GM12878 (cell line): ENCODE measurements at regions of chr17 and their contacts with region 1.

Region 1: GRCh38 chr17:36089888-36090836 is at the start of gene CCL3:
- DNase-seq: peak; percentile 99
- ATAC-seq: peak; percentile 70
- H3K4me3 ChIP-seq: peak within 1 kb of the TSS; percentile 64
- H3K27ac ChIP-seq: peak within 1 kb of the TSS; percentile 87
- H3K4me1 ChIP-seq: peaks cover 50% of the 10 kb centered on the region
- H3K27me3 ChIP-seq: no peaks in the 10 kb centered on the region
- CTCF ChIP-seq: no peak
- EP300 ChIP-seq: peak; percentile 91 to 96
- POLR2A ChIP-seq: peak; percentile 92
- RAD21 ChIP-seq: no peak
- polyA plus RNA-seq, gene CCL3: 240 to 318 TPM

Region 2: GRCh38 chr17:35931794-35932425 is 158.3 kb before region 1 on chr17:
- CTCF ChIA-PET with region 1: no interaction called
- POLR2A ChIA-PET with region 1: no interaction called
- RAD21 ChIA-PET with region 1: no interaction called
- SMC1A ChIA-PET with region 1: no interaction called
- in situ Hi-C with region 1: no loop called
- intact Hi-C with region 1: no loop called
- DNase-seq: no peak
- ATAC-seq: no peak
- H3K4me3 ChIP-seq: no peak overlapping the region
- H3K27ac ChIP-seq: no peak overlapping the region
- H3K4me1 ChIP-seq: peaks cover 5% of the 10 kb centered on the region; the same call in 1 of the 2 replicates
- H3K27me3 ChIP-seq: no peaks in the 10 kb centered on the region
- CTCF ChIP-seq: no peak
- EP300 ChIP-seq: no peak
- POLR2A ChIP-seq: no peak
- RAD21 ChIP-seq: no peak

Region 3: DNA sequence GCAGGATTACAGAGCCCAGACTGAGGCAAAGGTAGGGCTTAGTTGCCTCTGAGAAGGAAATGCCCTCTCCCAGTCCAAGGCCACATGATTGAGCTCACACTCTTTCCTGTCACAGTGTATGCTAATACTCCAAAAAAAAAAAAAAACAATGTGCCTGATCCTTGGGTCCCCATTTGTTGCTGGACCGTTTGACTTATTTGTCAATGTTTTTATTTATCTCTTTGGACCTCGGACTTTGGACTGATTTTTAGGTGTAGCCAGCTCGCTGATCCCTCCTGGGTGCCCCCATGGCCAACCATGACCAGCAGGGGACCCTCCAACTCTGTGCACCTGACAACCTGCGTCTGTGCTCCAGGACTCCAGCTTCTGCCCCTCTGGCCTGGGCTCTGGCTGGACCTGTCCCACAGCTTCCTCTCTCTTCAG is 108.2 kb before region 1 on chr17:
- CTCF ChIA-PET with region 1: interaction called, 5 read pairs
- POLR2A ChIA-PET with region 1: interaction called, 3 read pairs
- RAD21 ChIA-PET with region 1: interaction called, 6 read pairs
- SMC1A ChIA-PET with region 1: interaction called, 11 read pairs
- in situ Hi-C with region 1: no loop called
- intact Hi-C with region 1: no loop called
- DNase-seq: no peak
- ATAC-seq: peak; percentile 49
- H3K4me3 ChIP-seq: no peak overlapping the region
- H3K27ac ChIP-seq: no peak overlapping the region
- H3K4me1 ChIP-seq: peaks cover 6% of the 10 kb centered on the region; the same call in 1 of the 2 replicates
- H3K27me3 ChIP-seq: no peaks in the 10 kb centered on the region
- CTCF ChIP-seq: peak; percentile 36 to 46 (median 39); a peak in 5 of 6 replicates
- EP300 ChIP-seq: no peak
- POLR2A ChIP-seq: no peak
- RAD21 ChIP-seq: peak; percentile 71

Region 4: GRCh38 chr17:36107660-36108059 is 17.5 kb after region 1 on chr17:
- CTCF ChIA-PET with region 1: interaction called, 5 read pairs
- POLR2A ChIA-PET with region 1: interaction called, 4 read pairs
- RAD21 ChIA-PET with region 1: interaction called, 20 read pairs
- SMC1A ChIA-PET with region 1: interaction called, 22 read pairs
- in situ Hi-C with region 1: no loop called
- intact Hi-C with region 1: loop called (anchors 1 kb)
- DNase-seq: no peak
- ATAC-seq: no peak
- H3K4me3 ChIP-seq: no peak overlapping the region
- H3K27ac ChIP-seq: no peak overlapping the region
- H3K4me1 ChIP-seq: peaks cover 13% of the 10 kb centered on the region
- H3K27me3 ChIP-seq: no peaks in the 10 kb centered on the region
- CTCF ChIP-seq: no peak
- EP300 ChIP-seq: no peak
- POLR2A ChIP-seq: no peak
- RAD21 ChIP-seq: no peak

Region 5: GRCh38 chr17:36117505-36118382 is 27.6 kb after region 1 on chr17:
- CTCF ChIA-PET with region 1: interaction called, 10 read pairs
- POLR2A ChIA-PET with region 1: interaction called, 4 read pairs
- RAD21 ChIA-PET with region 1: interaction called, 29 read pairs
- SMC1A ChIA-PET with region 1: interaction called, 23 read pairs
- in situ Hi-C with region 1: no loop called
- intact Hi-C with region 1: no loop called
- DNase-seq: no peak
- ATAC-seq: peak; percentile 89
- H3K4me3 ChIP-seq: no peak overlapping the region
- H3K27ac ChIP-seq: no peak overlapping the region
- H3K4me1 ChIP-seq: peaks cover 18% of the 10 kb centered on the region
- H3K27me3 ChIP-seq: no peaks in the 10 kb centered on the region
- CTCF ChIP-seq: no peak
- EP300 ChIP-seq: no peak; a peak in 1 of 4 replicates
- POLR2A ChIP-seq: no peak
- RAD21 ChIP-seq: no peak

Region 6: DNA sequence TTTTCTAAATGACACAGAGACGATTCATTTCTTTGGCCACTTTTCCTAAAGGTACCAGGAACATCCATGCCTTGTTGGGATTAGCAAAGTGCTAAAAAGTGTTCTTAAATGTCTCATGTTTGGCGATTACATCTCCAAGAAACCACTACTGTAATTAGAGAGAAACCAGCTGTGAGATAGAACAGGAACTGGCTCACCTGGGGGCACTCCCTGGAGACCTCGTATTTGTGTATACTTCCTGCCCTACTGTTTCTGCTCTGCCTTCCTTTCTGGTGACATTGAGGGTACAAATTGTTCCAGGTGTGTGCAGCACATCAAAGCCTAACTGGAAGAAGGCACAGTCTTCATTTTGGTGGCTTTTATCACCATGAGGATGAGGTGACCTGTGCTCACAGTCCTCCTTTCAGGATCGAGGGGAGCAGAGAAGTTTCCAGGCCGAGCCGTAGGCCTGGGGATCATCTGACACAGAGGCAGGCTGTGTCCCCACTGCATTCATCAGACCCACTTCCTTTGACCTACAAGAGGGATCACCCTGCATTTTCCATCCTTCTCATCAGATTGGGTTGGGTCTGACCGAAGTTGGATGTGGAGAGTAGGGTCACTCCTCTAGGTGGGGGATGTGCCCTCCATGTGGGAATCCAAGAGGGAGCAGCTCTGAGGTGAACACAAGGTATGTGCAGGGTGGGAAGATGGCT is 37.2 kb after region 1 on chr17:
- CTCF ChIA-PET with region 1: interaction called, 15 read pairs
- POLR2A ChIA-PET with region 1: interaction called, 5 read pairs
- RAD21 ChIA-PET with region 1: interaction called, 58 read pairs
- SMC1A ChIA-PET with region 1: interaction called, 27 read pairs
- in situ Hi-C with region 1: no loop called
- intact Hi-C with region 1: loop called (anchors 5 kb)
- DNase-seq: peak; percentile 71
- ATAC-seq: peak; percentile 81
- H3K4me3 ChIP-seq: no peak overlapping the region
- H3K27ac ChIP-seq: peak overlapping the region; percentile 45
- H3K4me1 ChIP-seq: peaks cover 24% of the 10 kb centered on the region
- H3K27me3 ChIP-seq: no peaks in the 10 kb centered on the region
- CTCF ChIP-seq: no peak
- EP300 ChIP-seq: peak in 1 of 2 experiments; percentile 36; a peak in 1 of 4 replicates
- POLR2A ChIP-seq: 0 out of 2 replicates have a peak, but pooled peaks have one; percentile 16
- RAD21 ChIP-seq: no peak

Region 7: DNA sequence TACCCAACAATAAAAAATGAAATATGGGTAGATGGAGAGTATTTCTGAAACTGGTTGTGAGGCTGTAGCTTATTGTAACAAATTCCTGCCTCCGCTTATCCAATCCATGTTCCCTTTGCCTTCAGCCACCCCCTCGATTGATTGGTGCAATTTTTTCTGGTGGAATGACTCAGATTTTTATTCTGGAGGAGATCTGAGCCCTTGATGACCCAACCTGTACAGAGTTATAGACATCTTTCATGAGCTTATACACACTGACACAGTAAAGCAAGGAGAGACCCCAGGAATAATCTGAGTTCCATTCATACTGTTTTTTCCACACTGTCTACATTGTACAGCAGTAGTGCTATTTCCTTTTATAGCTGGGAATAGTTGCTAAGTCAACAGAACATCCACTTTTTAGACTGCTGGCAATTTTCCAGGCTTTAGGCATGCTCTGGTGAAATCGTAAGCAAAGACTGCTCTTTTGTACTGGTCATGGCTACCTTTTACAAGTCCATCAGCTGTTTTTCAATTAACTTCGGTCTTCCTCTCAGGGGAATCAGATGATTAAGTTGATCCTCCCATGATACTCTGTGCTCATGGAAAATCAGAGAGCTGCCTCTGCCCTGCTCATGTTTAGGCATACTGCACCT is 43.6 kb after region 1 on chr17:
- CTCF ChIA-PET with region 1: interaction called, 15 read pairs
- POLR2A ChIA-PET with region 1: interaction called, 5 read pairs
- RAD21 ChIA-PET with region 1: interaction called, 58 read pairs
- SMC1A ChIA-PET with region 1: interaction called, 27 read pairs
- in situ Hi-C with region 1: no loop called
- intact Hi-C with region 1: loop called (anchors 5 kb)
- DNase-seq: no peak
- ATAC-seq: no peak
- H3K4me3 ChIP-seq: no peak overlapping the region
- H3K27ac ChIP-seq: no peak overlapping the region
- H3K4me1 ChIP-seq: peaks cover 29% of the 10 kb centered on the region
- H3K27me3 ChIP-seq: no peaks in the 10 kb centered on the region
- CTCF ChIP-seq: no peak
- EP300 ChIP-seq: no peak
- POLR2A ChIP-seq: no peak
- RAD21 ChIP-seq: no peak

Region 8: DNA sequence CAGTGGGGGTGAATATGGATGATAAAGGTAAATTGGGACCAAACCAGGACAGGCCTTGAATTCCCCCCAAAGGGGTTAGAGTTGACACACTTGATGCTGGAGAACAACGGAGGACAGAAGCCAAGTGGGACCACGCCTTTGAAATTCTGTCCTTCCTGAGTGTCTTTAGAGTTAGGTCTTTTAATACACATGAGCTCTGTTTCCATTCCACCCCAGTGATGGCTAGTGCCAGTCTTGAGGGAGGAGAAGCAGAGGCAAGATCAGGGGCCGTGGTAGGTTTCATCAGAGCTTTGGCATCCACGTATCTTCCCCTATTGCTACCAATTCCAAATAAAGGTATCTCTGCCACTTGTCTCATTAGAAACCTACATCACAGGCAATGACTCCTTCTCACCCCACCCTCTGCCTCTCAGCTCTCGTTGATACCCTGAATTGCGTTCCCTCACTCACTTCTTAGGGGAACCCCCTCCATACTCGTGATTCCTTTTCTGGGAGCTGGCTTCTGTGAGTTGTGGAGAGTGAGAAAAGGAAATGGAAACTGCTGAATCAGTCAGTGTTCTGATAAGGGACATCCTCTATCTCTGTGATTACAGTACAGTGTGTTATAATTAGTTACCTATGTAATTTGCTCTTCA is 108.8 kb after region 1 on chr17:
- CTCF ChIA-PET with region 1: interaction called, 3 read pairs
- POLR2A ChIA-PET with region 1: interaction called, 5 read pairs
- RAD21 ChIA-PET with region 1: interaction called, 6 read pairs
- SMC1A ChIA-PET with region 1: interaction called, 13 read pairs
- in situ Hi-C with region 1: loop called (anchors 5 kb)
- intact Hi-C with region 1: no loop called
- DNase-seq: no peak
- ATAC-seq: peak; percentile 32
- H3K4me3 ChIP-seq: no peak overlapping the region
- H3K27ac ChIP-seq: no peak overlapping the region
- H3K4me1 ChIP-seq: peaks cover 38% of the 10 kb centered on the region
- H3K27me3 ChIP-seq: no peaks in the 10 kb centered on the region
- CTCF ChIP-seq: no peak
- EP300 ChIP-seq: no peak; a peak in 1 of 4 replicates
- POLR2A ChIP-seq: no peak
- RAD21 ChIP-seq: no peak